Endothelial cell of umbilical vein (primary cell): ENCODE measurements at regions of chr9 and their contacts with region 1.

Region 1: GRCh38 chr9:16626577-16627131 is 243.8 kb downstream of the BNC2 start:
- DNase-seq: peak; percentile 86
- H3K4me3 ChIP-seq: peak overlapping the region in 1 of 3 experiments; percentile 20
- H3K27ac ChIP-seq: peak overlapping the region; percentile 87
- H3K4me1 ChIP-seq: peaks cover 50% of the 10 kb centered on the region
- H3K27me3 ChIP-seq: no peaks in the 10 kb centered on the region
- CTCF ChIP-seq: no peak
- POLR2A ChIP-seq: no peak

Region 2: DNA sequence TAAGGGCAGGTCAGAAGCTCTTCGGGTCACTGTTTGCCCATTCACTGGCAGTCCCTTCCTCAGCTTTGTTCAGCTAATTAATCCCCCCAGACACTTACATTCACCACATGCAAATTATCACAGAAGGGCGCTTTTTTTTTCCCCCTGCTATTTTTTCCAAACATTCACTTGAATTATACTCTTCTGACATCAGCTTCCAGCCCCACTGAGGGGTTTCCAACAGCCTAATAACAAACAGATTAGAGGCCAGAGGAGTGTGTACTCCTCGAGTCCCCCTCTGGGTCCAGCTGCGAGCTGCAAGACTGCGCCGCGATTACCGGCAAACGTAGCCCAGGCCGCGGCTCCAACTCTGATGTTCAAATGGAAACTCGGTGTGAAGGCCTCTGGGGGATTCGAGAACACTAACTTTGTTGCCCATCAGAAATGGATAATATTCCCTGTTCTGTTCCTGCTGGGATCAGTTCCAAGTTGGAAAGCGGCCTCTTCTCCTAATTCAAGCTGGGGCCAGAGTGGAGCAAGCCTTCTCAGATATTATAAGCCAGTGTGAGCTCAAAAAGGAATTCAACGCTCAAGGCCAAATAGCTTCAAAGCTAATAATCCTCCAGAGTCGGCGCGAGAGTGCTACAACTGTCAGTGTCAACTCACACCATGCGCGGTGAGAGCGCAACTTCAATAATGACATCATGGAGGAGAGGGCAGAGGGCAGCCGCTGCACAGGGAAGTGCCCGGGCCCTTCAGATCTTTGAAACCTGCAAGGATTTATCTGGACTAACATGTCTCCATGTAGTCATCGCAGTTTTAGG is 317.0 kb before region 1 on chr9:
- CTCF ChIA-PET with region 1: no interaction called
- POLR2A ChIA-PET with region 1: no interaction called
- dilution Hi-C with region 1: no loop called
- intact Hi-C with region 1: no loop called
- DNase-seq: no peak
- H3K4me3 ChIP-seq: no peak overlapping the region
- H3K27ac ChIP-seq: no peak overlapping the region
- H3K4me1 ChIP-seq: no peaks in the 10 kb centered on the region
- H3K27me3 ChIP-seq: peaks cover 6 to 20% of the 10 kb centered on the region in 2 experiments
- CTCF ChIP-seq: no peak
- POLR2A ChIP-seq: no peak

Region 3: DNA sequence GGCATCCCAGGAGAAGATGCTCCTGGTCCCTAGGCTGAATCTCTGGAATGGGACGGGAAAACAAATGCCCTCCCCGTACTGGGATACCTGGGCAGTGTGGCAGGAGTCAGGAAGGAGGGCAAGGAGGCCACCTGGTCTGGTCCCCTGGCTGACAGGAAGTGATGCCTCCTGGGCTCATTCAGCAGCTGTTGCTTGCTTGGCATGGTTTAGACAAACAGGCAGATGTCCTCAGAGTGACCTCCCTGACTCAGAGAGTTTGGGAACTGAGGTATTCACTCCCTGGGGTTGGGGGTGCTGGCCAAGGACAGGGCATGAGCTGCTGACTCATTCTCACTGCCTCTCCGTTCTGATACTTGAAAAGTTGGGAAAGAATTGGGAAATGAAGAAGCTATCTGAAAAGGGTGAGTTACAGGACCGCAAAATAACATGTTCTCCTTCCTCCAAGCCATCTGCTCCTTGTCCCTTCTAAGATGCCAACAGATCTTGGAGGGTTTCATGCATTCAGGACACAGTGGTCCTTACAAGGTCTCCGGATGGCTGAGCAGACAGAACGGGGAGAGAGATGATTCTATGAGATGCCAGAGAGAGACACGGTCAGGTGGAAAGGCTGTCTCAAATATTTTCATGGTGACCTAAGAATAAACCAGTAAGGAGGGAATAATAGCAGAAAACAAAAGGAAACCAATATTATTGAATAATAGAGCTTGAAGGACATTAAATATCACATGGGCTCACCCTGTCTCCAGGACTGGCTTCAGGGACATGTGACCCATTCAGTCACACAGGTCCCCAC is 290.7 kb before region 1 on chr9:
- CTCF ChIA-PET with region 1: no interaction called
- POLR2A ChIA-PET with region 1: no interaction called
- dilution Hi-C with region 1: no loop called
- intact Hi-C with region 1: loop called (anchors 2 kb)
- DNase-seq: peak; percentile 82
- H3K4me3 ChIP-seq: no peak overlapping the region
- H3K27ac ChIP-seq: peak overlapping the region; percentile 81
- H3K4me1 ChIP-seq: peaks cover 25% of the 10 kb centered on the region
- H3K27me3 ChIP-seq: no peaks in the 10 kb centered on the region
- CTCF ChIP-seq: no peak
- POLR2A ChIP-seq: no peak

Region 4: DNA sequence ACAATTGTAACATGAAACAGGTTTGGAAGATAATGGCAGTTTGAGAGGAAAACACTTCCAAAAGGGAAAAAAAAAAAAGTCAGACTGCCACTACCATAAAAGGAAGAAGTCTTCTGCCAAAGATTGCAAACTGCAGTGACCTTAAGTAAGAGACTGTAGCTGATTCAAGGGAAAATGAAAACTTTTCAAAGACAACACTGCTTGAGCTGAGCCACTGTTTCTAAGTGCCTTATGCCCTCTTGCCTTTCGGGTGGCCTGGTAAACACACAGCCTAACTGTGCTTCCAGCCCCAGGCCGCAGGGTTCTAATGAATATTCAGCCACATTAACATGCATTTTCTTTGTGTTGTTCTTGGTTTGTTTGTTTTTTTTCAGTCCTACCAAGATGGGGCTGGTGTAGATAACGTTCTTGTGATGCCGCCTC is 110.8 kb before region 1 on chr9:
- CTCF ChIA-PET with region 1: no interaction called
- POLR2A ChIA-PET with region 1: no interaction called
- dilution Hi-C with region 1: no loop called
- intact Hi-C with region 1: loop called (anchors 1 kb)
- DNase-seq: peak; percentile 88
- H3K4me3 ChIP-seq: no peak overlapping the region
- H3K27ac ChIP-seq: peak overlapping the region; percentile 55
- H3K4me1 ChIP-seq: peaks cover 28% of the 10 kb centered on the region
- H3K27me3 ChIP-seq: no peaks in the 10 kb centered on the region
- CTCF ChIP-seq: no peak
- POLR2A ChIP-seq: no peak

Region 5: DNA sequence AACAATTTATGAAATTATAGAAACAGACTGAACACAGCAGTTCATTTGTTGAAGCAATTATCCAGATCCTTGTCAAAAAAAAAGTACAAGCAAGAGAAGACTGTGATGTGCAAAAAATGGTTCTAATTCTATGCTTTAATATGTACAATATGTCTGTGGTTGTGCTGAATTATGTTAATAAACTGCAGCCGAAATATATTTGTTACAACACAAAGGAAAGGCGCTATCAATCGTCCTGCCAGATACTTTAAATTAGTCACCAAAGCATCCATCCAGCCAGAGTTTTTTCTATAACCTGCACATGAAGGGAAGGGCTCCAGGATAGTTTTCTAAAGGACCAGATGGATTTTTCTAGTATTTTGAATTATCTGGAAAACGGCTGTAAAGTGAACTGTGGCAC is 15.7 kb before region 1 on chr9:
- CTCF ChIA-PET with region 1: interaction called, 11 read pairs
- POLR2A ChIA-PET with region 1: interaction called, 3 read pairs
- dilution Hi-C with region 1: no loop called
- intact Hi-C with region 1: loop called (anchors 1 kb)
- DNase-seq: no peak
- H3K4me3 ChIP-seq: no peak overlapping the region
- H3K27ac ChIP-seq: no peak overlapping the region
- H3K4me1 ChIP-seq: peaks cover 20% of the 10 kb centered on the region
- H3K27me3 ChIP-seq: no peaks in the 10 kb centered on the region
- CTCF ChIP-seq: no peak
- POLR2A ChIP-seq: no peak

Region 6: GRCh38 chr9:16679327-16679821 is 52.7 kb after region 1 on chr9:
- CTCF ChIA-PET with region 1: no interaction called
- POLR2A ChIA-PET with region 1: no interaction called
- dilution Hi-C with region 1: no loop called
- intact Hi-C with region 1: no loop called
- DNase-seq: no peak
- H3K4me3 ChIP-seq: no peak overlapping the region
- H3K27ac ChIP-seq: no peak overlapping the region
- H3K4me1 ChIP-seq: peaks cover 4% of the 10 kb centered on the region
- H3K27me3 ChIP-seq: no peaks in the 10 kb centered on the region
- CTCF ChIP-seq: no peak
- POLR2A ChIP-seq: no peak

Region 7: DNA sequence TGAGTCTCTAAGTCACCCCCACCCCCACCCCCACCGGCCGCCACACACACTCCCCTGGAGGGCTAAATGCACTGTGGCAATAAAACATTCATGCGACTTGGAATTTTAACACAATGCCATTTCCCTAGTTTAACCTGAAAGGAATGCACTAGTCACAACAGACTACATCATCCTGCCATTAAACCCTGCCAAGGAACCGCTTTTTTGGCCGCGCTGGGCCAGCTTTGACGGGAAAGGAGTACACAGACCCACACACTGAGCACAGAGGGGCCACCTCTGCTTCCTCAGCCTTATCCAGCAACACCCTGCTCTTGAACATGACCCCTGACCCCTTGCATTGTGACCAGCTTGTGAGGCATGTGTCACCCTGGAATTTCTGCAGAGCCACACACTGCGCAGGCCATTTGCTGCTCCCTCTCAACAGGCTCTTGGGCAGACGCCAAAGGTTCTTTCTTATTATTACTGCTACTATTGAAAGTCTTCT is 78.5 kb after region 1 on chr9:
- CTCF ChIA-PET with region 1: interaction called, 7 read pairs
- POLR2A ChIA-PET with region 1: no interaction called
- dilution Hi-C with region 1: no loop called
- intact Hi-C with region 1: loop called (anchors 1 kb)
- DNase-seq: peak; percentile 99
- H3K4me3 ChIP-seq: peak overlapping the region in 2 of 3 experiments; percentile 57 to 97
- H3K27ac ChIP-seq: peak overlapping the region; percentile 99
- H3K4me1 ChIP-seq: peaks cover 51% of the 10 kb centered on the region
- H3K27me3 ChIP-seq: no peaks in the 10 kb centered on the region
- CTCF ChIP-seq: no peak
- POLR2A ChIP-seq: peak; percentile 44